MCF 10A (cell line): ENCODE measurements at regions of chr12 and their contacts with region 1.

Region 1: DNA sequence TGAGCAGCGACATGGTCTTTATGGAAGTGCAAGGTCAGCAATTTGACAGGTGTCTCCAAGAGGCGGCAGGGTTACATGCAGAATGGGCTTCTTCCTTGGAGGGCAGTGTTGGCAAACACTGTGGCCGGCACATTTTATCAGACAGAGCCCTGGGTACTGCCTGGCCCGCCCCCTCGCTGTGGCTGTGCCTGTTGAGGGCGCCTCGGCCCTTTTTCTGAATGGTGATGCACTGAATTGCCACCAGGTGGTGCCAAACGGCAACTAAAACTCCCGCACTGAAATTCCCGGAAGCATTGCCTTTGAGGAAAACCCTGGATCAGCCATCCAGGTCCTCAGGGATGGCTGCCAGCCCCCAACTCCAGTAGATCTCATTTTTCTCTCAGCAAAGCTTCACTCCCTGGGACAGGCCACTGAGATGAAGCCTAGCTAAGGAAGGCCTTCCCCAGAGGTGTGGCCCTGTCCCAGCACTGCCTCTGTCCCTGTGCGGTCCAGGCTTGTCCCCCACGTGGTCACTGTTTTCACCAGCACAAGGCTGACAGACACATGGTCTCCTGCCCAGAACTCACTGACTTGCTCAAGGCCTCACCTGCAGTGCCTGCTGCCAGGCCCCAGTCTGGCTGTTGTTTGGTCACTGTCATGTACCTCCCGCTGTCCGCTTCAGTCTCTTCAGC is 73.6 kb downstream of the TESC start:
- DNase-seq: peak; percentile 70
- H3K4me3 Mint-ChIP-seq: no peak overlapping the region
- H3K27ac Mint-ChIP-seq: no peak overlapping the region
- H3K4me1 Mint-ChIP-seq: no peaks in the 10 kb centered on the region
- H3K27me3 Mint-ChIP-seq: no peaks in the 10 kb centered on the region
- CTCF ChIP-seq: peak; percentile 73

Region 2: GRCh38 chr12:117000316-117000715 is 25.3 kb before region 1 on chr12:
- CTCF ChIA-PET with region 1: interaction called, 17 read pairs
- POLR2A ChIA-PET with region 1: no interaction called
- intact Hi-C with region 1: no loop called
- DNase-seq: no peak
- H3K4me3 Mint-ChIP-seq: no peak overlapping the region
- H3K27ac Mint-ChIP-seq: no peak overlapping the region
- H3K4me1 Mint-ChIP-seq: no peaks in the 10 kb centered on the region
- H3K27me3 Mint-ChIP-seq: no peaks in the 10 kb centered on the region
- CTCF ChIP-seq: no peak

Region 3: DNA sequence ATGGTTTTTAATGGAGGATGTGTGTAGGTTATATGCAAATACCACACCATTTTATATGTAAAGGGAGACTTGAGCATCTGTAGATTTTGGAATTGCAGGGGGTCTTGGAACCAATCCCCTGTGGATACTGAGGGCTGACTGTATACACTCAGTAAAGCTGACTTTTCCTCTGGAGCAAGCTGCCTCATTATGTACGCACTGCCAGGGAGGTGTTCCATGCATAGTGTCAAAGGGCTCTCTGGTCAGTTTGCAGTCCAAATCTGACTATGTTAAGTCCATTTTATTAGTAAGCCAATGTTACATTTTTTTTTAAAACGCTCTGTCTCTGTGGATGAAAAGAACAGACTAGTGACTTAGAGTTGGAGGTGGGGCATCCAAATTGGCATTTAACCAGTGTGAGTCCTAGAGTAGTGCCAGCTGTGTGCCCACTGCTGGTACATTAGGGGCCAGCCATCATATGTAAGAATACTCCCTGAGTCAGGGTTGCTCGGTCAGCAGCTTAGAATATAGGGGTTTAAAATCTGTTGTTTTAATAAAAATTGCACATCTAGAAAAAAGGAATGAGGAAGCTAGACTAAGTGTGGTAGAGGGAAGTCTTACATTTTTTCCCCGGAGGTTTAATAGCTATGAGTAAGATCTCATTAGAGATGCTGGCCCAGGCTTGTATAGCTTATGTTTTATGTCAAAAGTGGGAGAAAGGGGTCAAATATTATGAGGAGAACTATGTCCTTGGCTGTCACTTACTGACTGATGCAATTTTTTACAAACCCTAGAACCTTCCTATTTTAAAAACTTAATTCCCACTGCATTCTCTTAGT is 13.4 kb before region 1 on chr12:
- CTCF ChIA-PET with region 1: interaction called, 27 read pairs
- POLR2A ChIA-PET with region 1: interaction called, 4 read pairs
- intact Hi-C with region 1: no loop called
- DNase-seq: no peak
- H3K4me3 Mint-ChIP-seq: no peak overlapping the region
- H3K27ac Mint-ChIP-seq: no peak overlapping the region
- H3K4me1 Mint-ChIP-seq: no peaks in the 10 kb centered on the region
- H3K27me3 Mint-ChIP-seq: no peaks in the 10 kb centered on the region
- CTCF ChIP-seq: no peak

Region 4: DNA sequence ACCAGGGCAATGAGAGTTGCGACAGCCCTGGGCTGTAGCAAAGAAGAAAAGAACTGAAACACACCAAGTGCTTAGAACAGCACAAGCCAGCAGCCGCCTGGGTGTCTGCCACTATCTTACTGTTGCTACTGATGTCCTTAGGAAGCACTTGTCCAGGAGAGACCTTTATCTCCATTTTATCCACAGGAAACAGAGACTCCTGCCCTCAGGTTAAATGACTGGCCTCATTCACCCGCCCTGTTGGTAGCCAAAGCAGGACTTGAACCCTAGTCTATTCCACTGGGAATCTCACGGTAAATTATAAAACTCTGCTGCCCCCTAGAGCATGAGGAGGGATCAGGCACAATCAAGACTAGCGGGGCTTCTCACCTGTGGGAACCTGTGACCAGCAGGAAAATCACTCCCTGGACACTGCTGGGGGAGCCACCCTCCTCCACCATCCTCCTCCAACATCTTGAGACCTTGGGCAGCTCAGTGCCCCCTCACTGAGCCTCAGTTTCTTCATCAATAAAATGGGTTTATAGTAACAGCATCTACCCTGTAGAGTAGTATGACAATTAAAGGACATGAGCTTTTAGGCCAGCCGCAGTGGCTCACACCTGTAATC is 94.1 kb after region 1 on chr12:
- CTCF ChIA-PET with region 1: interaction called, 35 read pairs
- POLR2A ChIA-PET with region 1: no interaction called
- intact Hi-C with region 1: loop called (anchors 1 kb)
- DNase-seq: peak; percentile 63
- H3K4me3 Mint-ChIP-seq: no peak overlapping the region
- H3K27ac Mint-ChIP-seq: no peak overlapping the region
- H3K4me1 Mint-ChIP-seq: no peaks in the 10 kb centered on the region
- H3K27me3 Mint-ChIP-seq: no peaks in the 10 kb centered on the region
- CTCF ChIP-seq: peak; percentile 73

Region 5: DNA sequence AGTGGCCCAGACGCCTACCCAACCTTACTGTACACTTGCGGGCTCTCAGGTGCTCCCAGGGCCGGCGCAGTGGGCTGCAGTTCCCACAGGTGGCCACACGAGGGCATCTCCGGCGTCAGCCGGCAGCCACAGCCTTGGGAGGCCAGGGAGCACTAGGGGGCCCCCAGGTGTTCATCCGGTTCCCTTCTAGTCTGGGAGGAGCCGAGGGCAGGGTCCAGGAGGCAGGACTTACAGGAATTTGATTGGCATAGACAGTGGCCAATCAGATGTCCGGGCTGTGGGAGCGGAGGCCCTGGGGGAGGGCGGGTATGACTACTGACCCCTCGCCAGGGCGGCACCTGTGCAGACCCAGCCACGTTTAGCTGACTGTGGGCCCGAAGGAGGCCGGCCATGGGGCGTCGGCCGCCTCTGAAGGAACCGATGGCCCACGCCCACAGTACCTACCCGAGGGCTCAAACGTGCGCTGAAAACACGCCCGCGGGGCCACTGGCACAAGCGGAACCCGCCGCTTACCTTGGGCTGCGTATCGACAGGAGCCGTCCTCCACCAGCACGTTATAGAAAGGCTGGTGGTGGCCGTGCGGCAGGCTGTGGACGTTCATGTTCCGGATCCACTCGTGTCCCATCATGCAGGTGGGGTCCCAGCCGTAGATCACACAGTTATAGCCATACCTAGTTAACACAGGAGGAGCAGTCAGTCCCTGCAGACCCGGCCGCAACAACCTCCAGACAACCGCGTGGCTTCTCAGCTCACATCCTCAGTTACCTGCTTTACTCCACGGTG is 129.9 kb after region 1 on chr12:
- CTCF ChIA-PET with region 1: interaction called, 4 read pairs
- POLR2A ChIA-PET with region 1: no interaction called
- intact Hi-C with region 1: loop called (anchors 1 kb)
- DNase-seq: peak; percentile 87
- H3K4me3 Mint-ChIP-seq: no peak overlapping the region
- H3K27ac Mint-ChIP-seq: no peak overlapping the region
- H3K4me1 Mint-ChIP-seq: no peaks in the 10 kb centered on the region
- H3K27me3 Mint-ChIP-seq: no peaks in the 10 kb centered on the region
- CTCF ChIP-seq: peak; percentile 96

Region 6: GRCh38 chr12:117167769-117168168 is 142.2 kb after region 1 on chr12:
- CTCF ChIA-PET with region 1: no interaction called
- POLR2A ChIA-PET with region 1: no interaction called
- intact Hi-C with region 1: no loop called
- DNase-seq: no peak
- H3K4me3 Mint-ChIP-seq: no peak overlapping the region
- H3K27ac Mint-ChIP-seq: no peak overlapping the region
- H3K4me1 Mint-ChIP-seq: no peaks in the 10 kb centered on the region
- H3K27me3 Mint-ChIP-seq: no peaks in the 10 kb centered on the region
- CTCF ChIP-seq: no peak